H1 (cell line): ENCODE measurements at regions of chr10 and their contacts with region 1.

Region 1: DNA sequence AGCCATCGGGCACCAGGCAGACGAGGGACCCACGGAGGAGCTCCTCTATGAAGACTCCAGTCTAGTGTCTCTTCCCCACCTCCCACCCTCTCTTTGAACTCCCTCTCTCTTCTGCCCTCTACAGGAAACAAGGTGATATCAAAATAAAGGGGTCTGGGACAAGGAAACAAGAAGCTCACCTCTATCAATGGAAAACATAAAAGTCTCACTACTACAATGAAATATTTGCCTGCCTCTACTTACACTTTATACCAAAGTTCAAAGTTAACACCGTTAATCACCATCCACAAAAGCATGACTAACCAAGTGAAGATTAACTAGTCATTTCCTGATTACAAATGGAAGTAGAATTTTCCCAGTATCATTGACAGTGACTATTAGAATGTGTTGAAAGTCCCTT is 82.2 kb downstream of the PARD3 start:
- DNase-seq: no peak
- H3K4me3 ChIP-seq: no peak overlapping the region
- H3K27ac ChIP-seq: no peak overlapping the region
- H3K4me1 ChIP-seq: peaks cover 8 to 11% (median 9%) of the 10 kb centered on the region in 4 experiments
- H3K27me3 ChIP-seq: no peaks in the 10 kb centered on the region
- CTCF ChIP-seq: peak in 2 of 3 experiments; percentile 34 to 62; a peak in 2 of 4 replicates
- EP300 ChIP-seq: no peak
- POLR2A ChIP-seq: no peak
- RAD21 ChIP-seq: peak; percentile 38 to 55

Region 2: GRCh38 chr10:34655286-34656170 is 77.4 kb before region 1 on chr10:
- CTCF ChIA-PET with region 1: interaction called, 10 read pairs
- POLR2A ChIA-PET with region 1: no interaction called
- DNase-seq: peak; percentile 62 to 74
- H3K4me3 ChIP-seq: no peak overlapping the region
- H3K27ac ChIP-seq: no peak overlapping the region
- H3K4me1 ChIP-seq: peaks cover 10 to 37% (median 20%) of the 10 kb centered on the region in 4 experiments
- H3K27me3 ChIP-seq: no peaks in the 10 kb centered on the region
- CTCF ChIP-seq: peak in 2 of 3 experiments; percentile 51 to 77; a peak in 2 of 4 replicates
- EP300 ChIP-seq: no peak
- POLR2A ChIP-seq: no peak
- RAD21 ChIP-seq: peak; percentile 57

Region 3: DNA sequence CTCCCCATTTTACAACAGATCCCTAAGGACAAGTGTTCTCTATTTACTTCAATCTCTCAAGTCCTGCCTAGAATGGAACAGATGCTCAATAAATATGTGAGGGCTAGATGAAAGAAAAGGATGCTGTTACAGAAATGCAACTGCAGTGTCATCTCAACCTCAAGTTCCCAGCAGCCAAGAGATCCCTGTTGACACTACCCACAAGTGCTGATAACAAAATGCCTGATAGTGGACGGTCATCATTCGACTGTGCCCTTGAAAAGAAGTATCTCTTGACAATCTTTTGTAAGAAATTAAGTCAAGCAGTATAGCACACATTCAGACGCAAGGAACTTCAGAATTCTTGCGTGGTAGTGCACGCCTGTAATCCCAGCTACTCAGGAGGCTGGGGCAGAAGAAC is 51.0 kb before region 1 on chr10:
- CTCF ChIA-PET with region 1: interaction called, 29 read pairs
- POLR2A ChIA-PET with region 1: no interaction called
- DNase-seq: no peak
- H3K4me3 ChIP-seq: no peak overlapping the region
- H3K27ac ChIP-seq: no peak overlapping the region
- H3K4me1 ChIP-seq: peaks cover 0 to 7% (median 3%) of the 10 kb centered on the region in 4 experiments; a peak in 5 of 7 replicates
- H3K27me3 ChIP-seq: no peaks in the 10 kb centered on the region
- CTCF ChIP-seq: no peak
- EP300 ChIP-seq: no peak
- POLR2A ChIP-seq: no peak
- RAD21 ChIP-seq: no peak

Region 4: DNA sequence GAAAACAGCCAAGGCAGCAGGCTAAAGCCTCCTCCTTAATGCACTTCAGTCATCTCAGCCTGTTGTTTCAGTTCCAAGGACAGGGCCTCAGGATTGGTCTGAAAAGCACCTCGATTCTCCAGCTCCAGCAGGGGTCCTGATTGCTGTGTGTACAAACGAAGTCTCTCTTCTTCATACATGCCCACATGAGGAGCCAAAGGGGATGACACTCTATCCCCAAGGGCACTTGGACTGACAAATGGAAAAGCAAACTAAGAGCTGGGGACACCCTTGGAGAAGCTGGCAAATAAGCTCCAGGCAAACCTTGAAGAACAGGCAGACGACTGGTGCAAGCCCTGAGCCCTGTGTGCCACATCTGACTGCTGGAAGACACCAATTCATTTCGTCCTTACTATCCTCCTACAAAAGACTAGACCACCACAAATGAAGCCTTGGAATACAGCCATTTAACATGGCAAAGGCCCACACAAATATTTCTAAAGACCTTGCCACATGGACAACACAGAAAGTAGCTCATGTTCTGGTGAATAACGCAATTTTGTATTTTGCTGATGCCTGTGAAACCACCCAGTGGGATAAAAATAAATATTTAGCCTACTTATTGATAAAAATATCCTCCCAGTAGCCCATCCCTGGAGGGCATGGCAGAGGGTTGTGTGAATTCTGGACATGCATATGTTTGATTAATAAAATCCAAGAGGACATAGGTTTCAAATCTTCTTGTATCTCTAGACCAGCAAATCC is 20.3 kb after region 1 on chr10:
- CTCF ChIA-PET with region 1: interaction called, 28 read pairs
- POLR2A ChIA-PET with region 1: no interaction called
- DNase-seq: no peak
- H3K4me3 ChIP-seq: no peak overlapping the region
- H3K27ac ChIP-seq: no peak overlapping the region
- H3K4me1 ChIP-seq: peaks cover 0 to 6% (median 3%) of the 10 kb centered on the region in 4 experiments; a peak in 4 of 7 replicates
- H3K27me3 ChIP-seq: no peaks in the 10 kb centered on the region
- CTCF ChIP-seq: no peak
- EP300 ChIP-seq: no peak
- POLR2A ChIP-seq: no peak
- RAD21 ChIP-seq: no peak

Region 5: GRCh38 chr10:34791947-34792346 is 59.0 kb after region 1 on chr10:
- CTCF ChIA-PET with region 1: interaction called, 12 read pairs
- POLR2A ChIA-PET with region 1: no interaction called
- DNase-seq: no peak
- H3K4me3 ChIP-seq: no peak overlapping the region
- H3K27ac ChIP-seq: no peak overlapping the region
- H3K4me1 ChIP-seq: peaks cover 0 to 7% (median 2%) of the 10 kb centered on the region in 4 experiments; a peak in 1 of 7 replicates
- H3K27me3 ChIP-seq: no peaks in the 10 kb centered on the region
- CTCF ChIP-seq: 0 out of 4 replicates have a peak, but pooled peaks of 1 of the 3 experiments have one; percentile 16
- EP300 ChIP-seq: no peak
- POLR2A ChIP-seq: no peak
- RAD21 ChIP-seq: peak; percentile 15 to 45; a peak in 2 of 4 replicates